ENCODE measurements at regions of chr11 and their contacts with region 1.

Region 1: GRCh38 chr11:72589802-72590761 is 84.1 kb downstream of the PDE2A start:
- DNase-seq: peak; percentile 74
- ATAC-seq: peak; percentile 33
- H3K4me3 ChIP-seq: peak overlapping the region; percentile 20
- H3K27ac ChIP-seq: no peak overlapping the region
- H3K4me1 ChIP-seq: peaks cover 10% of the 10 kb centered on the region
- H3K27me3 ChIP-seq: peaks cover 40% of the 10 kb centered on the region
- CTCF ChIP-seq: peak; percentile 40

Region 2: DNA sequence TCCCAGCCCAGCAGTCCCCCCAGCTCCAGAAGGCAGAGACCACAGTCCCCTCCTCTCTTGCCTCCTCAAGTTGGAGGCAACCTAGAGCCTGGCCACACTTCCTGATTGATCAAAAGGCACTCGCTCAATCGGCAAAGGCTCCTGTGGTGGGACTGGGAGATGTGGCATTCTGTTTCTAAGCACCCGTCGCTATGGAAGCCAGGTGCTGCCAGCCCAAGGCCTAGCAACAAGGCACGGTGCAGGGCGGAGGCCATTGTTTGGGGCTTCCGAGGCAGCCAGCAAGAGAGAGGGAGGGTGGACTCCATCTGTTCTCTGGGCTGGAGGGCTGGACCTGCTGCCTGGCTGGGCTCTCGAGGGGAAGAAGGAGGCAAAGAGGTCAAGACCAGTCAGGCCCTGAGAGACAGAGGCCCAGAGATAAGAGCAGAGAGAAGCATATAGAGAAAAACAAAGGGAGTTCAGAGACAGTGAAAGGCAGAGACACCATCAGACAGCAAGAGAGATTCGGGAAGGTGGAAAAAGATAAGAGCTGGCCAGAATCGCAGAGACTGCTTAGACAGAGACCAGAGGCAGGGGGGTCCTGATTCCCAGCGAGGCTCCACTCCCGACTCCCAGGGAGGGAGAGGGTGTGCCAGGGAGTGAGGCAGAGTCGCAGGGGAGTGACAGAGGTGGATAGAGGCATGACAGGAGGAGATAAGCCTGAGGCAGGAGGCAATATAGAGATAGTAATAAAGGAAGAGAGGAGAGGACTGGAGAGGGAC is 63.0 kb after region 1 on chr11:
- intact Hi-C with region 1: loop called (anchors 5 kb)
- DNase-seq: no peak
- ATAC-seq: no peak
- H3K4me3 ChIP-seq: no peak overlapping the region
- H3K27ac ChIP-seq: no peak overlapping the region
- H3K4me1 ChIP-seq: no peaks in the 10 kb centered on the region
- H3K27me3 ChIP-seq: no peaks in the 10 kb centered on the region
- CTCF ChIP-seq: no peak

Measured in upper lobe of right lung (tissue), 1 donor.